ENCODE measurements at regions of chr13 and their contacts with region 1.

Region 1: GRCh38 chr13:73754727-73755292 is 379.4 kb downstream of the KLF12 start:
- DNase-seq: no peak
- ATAC-seq: peak; percentile 93

Region 2: DNA sequence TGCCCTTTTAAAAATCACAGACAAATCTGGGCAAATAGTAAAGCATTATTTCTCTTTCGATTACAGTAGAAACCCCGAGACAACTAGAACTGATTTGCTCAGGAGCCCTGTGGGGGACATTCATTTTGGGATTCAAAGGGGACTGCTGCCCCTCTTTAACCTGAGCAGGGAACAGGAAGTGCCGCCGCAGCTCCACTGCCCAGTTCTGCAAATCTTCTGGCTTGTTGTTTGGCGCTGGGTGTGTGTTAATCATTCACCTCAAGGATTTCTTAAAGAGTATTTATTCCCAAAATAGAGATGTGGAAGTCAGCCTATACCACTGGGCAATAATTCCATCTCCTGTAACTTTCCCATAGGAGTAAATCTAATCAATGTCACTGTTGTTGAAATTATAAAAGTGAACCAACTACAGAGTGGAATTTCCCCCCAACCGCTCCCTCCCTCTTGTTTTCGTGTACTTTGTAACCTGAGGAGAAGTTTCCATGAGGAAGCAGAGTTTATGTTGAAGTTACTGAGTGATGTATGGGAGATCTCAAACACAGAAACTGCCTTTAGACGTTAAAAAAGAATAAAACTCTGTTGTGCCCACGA is 136.4 kb before region 1 on chr13:
- intact Hi-C with region 1: no loop called
- DNase-seq: peak; percentile 53 to 60
- ATAC-seq: peak; percentile 87

Region 3: DNA sequence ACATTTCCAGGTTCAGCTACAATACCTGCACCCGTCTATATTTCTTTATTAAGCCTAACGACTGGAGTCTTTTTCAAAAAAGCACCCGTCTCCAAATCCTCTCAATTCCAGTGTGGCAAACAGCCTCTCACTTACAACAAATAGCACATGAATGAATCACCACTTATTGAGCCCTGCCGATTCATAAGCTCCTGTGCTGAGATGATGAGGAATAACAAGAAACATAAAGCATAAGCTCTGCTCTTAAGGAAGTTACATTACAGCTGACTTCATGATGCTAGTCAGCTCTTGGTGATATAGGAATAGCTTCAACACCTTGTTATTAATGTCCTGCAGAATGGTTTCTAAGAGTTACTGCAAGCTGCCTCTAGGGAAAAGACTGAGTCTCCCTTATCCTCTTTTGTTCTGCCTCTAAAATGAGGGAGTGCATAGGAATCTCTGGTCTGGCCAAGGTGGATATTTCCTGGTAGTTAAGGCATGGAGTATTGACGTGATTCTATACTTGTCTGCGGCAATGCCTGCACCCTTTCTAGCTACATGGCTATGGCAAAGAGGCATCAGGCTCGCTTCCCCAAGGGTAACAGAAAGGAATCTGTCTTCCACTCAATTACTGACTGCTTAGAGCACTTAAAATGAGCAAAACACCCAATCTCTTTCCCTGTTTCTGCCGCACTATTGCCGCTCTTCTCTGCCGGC is 183.7 kb after region 1 on chr13:
- intact Hi-C with region 1: no loop called
- DNase-seq: no peak
- ATAC-seq: no peak

Region 4: DNA sequence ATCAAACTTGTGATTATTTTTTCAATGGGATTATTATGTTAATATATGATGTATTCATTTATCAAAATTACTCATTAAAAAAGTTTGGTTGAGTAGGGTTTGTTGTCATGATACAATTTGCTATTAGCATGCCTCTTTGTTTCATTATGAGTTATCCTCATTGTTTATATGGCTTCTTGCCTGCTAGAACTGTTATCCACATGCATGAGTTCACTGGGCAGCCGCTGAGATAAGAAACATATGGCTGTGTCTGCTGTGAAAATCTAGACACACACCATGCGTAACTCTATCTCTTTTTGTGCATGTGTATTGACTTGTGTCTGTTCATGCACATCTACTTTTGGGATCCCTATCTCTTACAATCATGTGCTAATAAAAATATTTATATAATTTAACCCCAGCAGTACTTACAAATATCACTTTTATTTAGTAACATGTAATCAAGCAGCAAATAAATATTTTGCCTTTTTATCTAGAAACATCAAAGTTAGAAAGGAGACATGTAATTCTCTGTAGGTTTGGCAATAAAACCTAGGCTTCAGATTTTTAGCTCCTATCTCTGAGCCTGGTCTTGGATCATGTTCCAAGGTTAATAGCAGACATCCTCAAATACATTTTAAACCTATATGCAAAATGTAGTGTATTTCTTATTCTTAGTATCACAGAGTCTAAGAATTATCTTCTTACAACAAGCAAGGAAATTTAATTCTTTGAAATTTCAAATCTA is 390.6 kb after region 1 on chr13:
- intact Hi-C with region 1: loop called in 1 of 2 experiments (anchors 10 kb)
- DNase-seq: no peak
- ATAC-seq: no peak

Region 5: DNA sequence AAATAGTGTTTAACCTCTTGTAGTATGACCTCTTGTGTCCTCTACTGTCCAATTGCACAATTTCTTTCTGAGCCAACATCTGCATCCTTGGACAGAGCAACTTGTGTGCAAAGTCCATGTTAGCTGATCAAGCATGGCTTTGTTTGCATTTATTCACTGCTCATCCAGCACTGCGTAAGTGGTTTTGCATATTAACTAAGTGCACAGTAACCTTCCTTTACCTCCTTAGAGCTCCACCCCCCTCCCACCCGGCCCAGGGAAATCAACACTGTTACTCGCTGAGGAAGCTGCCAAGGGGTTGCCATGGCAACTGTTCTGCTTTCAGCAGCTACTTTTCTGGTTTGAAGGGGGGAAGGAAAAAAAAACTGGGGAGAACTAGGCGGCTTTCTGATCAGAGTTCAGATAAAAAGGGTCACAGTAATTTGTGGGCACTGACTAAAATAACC is 532.9 kb after region 1 on chr13:
- intact Hi-C with region 1: loop called in 1 of 2 experiments (anchors 10 kb)
- DNase-seq: peak; percentile 79 to 88
- ATAC-seq: peak; percentile 80

Region 6: GRCh38 chr13:75219479-75220237 is 1464.8 kb after region 1 on chr13:
- intact Hi-C with region 1: loop called in 1 of 2 experiments (anchors 5 kb)
- DNase-seq: peak; percentile 45 to 85
- ATAC-seq: peak; percentile 97

Measured in left colon (tissue), 2 donors.